ENCODE measurements at regions of chr16 and their contacts with region 1.

Region 1: DNA sequence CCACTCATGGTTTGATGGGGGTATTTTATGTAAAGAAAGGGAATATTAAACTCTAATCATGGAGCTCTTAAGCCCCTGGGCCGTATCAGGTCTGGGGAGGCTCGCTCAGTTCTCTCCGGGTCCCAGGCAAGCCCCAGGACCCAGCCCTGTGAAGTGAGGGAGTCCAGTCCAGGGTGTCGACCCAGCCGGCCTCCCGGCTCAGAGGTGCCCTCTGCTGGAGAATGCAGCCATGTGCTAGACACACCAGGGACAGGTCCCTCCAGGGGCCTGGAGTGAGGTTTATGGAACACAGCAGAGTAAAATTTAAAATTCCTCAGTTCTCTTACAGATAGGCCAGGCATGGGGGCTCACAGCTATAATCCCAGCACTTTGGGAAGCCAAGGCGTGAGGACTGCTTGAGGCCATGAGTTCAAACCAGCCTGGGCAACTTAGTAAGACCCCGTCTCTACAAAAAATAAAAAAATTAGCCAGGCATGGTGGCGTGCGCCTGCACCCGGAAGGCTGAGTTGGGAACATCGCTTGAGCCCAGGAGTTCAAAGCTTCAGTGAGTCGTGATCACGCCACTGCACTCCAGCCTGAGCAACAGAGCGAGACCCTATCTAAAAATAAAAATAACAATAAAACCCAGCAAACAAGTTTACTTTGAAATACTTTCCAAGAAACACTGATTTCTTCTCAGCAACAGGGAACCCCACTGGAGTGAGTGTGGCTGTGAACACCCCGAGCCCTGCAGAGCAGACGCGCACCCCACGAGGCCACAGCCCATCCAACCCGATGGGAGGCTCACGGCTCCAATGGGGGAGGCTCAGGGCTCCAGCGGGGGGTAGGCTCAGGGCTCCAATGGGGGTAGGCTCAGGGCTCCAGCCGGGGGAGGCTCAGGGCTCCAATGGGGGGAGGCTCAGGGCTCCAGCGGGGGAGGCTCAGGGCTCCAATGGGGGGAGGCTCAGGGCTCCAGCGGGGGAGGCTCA is 72.2 kb downstream of the ZNF778 start:
- DNase-seq: peak; percentile 61 to 79 (median 67)
- H3K4me3 ChIP-seq: no peak overlapping the region
- H3K27ac ChIP-seq: no peak overlapping the region
- H3K4me1 ChIP-seq: no peaks in the 10 kb centered on the region
- H3K27me3 ChIP-seq: no peaks in the 10 kb centered on the region

Region 2: DNA sequence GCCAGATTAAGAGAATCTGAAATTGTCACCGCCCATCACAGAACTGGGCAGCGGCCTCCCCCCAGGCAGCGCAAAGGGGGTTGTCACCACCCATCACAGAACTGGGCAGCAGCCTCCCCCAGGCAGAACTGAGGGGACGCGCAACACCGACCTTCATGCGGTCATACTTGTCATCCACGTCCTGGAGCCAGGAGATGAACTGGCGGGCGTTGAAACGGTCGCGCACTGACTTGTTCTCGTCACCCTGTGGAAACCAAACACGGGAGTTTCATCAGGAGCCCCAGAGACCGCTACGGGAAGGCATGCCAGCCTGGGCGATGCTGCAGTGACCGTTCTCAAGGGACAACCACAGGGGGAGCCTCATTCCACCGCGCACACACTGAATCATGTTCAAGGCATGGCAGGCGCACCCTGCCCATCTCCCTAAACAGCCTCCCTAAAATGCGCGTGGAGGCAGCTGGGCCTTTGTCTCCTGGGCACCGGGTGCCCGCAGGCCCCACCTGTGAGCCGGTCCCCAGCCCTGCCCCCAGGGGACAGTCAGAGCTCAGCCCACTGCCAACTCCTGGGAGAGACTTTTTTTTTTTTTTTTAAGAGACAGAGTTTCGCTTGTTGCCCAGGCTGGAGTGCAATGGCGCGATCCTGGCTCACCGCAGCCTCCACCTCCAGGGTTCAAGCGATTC is 18.9 kb before region 1 on chr16:
- CTCF ChIA-PET with region 1: interaction called, 10 read pairs
- POLR2A ChIA-PET with region 1: no interaction called
- DNase-seq: no peak
- H3K4me3 ChIP-seq: no peak overlapping the region
- H3K27ac ChIP-seq: no peak overlapping the region
- H3K4me1 ChIP-seq: no peaks in the 10 kb centered on the region
- H3K27me3 ChIP-seq: no peaks in the 10 kb centered on the region

Region 3: DNA sequence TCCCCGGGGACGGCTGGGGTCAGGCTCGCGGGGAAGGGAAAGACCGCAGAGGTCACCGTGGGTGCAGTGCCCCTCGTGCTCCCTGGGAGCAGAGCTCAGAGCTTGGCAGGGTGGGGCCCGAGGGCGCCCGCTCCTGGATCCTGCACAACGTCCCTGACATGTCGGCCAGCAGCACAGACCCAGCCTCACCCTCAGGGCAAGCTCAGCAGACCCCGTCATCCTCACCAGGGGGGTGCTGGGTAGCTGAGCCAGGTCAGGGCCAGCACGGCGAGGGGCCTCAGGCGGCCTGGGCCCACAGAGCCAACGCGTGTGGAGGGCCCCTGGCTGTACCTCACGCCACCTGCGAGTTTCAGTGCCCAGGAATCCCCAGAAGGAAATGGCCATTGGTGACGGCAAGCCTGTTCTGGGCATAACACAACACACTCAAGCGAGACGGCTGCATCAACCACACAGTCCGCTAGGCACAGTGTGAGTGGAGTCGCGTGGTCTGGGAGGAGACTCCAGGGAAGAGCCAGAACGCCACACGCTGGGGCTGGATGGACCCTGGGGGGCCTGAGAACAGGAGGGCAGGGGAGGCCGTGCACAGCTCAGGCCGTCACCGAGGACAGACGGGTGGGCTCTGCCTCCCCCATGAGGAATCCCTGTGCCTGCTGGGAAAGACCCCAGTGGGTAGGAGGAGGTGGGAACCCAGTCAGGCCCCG is 11.9 kb before region 1 on chr16:
- CTCF ChIA-PET with region 1: interaction called, 40 read pairs
- POLR2A ChIA-PET with region 1: no interaction called
- DNase-seq: no peak
- H3K4me3 ChIP-seq: no peak overlapping the region
- H3K27ac ChIP-seq: no peak overlapping the region
- H3K4me1 ChIP-seq: no peaks in the 10 kb centered on the region
- H3K27me3 ChIP-seq: no peaks in the 10 kb centered on the region

Region 4: GRCh38 chr16:89303617-89304016 is 13.9 kb after region 1 on chr16:
- CTCF ChIA-PET with region 1: interaction called, 20 read pairs
- POLR2A ChIA-PET with region 1: no interaction called
- DNase-seq: peak in 2 of 3 donors; percentile 72
- H3K4me3 ChIP-seq: no peak overlapping the region
- H3K27ac ChIP-seq: peak overlapping the region in 1 of 2 experiments; percentile 27
- H3K4me1 ChIP-seq: peaks cover 0 to 32% (median 25%) of the 10 kb centered on the region in 4 experiments
- H3K27me3 ChIP-seq: no peaks in the 10 kb centered on the region

Region 5: GRCh38 chr16:89308390-89309333 is 18.9 kb after region 1 on chr16:
- CTCF ChIA-PET with region 1: interaction called, 25 read pairs
- POLR2A ChIA-PET with region 1: no interaction called
- DNase-seq: peak in 2 of 3 donors; percentile 32 to 38
- H3K4me3 ChIP-seq: no peak overlapping the region
- H3K27ac ChIP-seq: no peak overlapping the region
- H3K4me1 ChIP-seq: peaks cover 0 to 20% (median 14%) of the 10 kb centered on the region in 4 experiments
- H3K27me3 ChIP-seq: no peaks in the 10 kb centered on the region

Region 6: DNA sequence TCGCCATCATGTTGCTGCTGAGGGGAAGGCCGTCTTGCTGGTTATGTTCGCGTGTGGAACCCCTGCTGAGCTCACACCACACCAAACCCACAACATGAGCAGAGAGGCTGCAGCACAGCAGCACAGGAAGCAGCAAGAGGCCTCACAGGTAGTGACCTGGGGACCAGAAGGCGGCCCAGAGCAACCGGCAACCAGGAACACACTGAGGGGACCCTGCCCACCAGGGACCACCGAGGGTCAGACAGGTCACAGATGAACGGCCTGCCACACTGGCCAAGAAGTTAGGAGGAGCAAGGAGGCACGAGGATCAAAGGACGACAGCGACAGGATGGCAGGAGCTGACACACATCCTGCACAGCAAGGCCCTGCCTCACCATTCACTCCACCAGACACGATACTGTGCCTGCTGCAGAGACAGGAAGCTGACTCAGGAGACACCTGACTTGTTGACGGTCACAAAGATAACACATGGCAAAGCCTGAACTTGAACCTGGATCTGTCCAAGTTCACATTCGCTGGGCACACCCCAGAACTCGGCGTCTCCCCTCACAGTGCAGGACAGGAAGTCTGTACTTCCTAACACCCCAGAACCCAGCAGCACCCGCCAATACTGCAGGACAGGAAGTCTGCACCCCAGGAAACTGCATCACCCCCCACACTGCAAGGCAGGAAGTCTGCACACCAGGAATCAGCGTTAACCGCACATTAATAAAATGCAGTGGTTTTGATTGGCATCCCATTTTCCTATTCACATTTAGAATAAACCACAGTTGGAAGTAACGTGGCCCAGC is 26.3 kb after region 1 on chr16:
- CTCF ChIA-PET with region 1: interaction called, 25 read pairs
- POLR2A ChIA-PET with region 1: no interaction called
- DNase-seq: peak; percentile 90 to 98 (median 96)
- H3K4me3 ChIP-seq: peak overlapping the region in 4 of 7 experiments; percentile 17 to 60 (median 40)
- H3K27ac ChIP-seq: peak overlapping the region; percentile 41 to 74
- H3K4me1 ChIP-seq: peaks cover 3 to 79% (median 68%) of the 10 kb centered on the region in 4 experiments
- H3K27me3 ChIP-seq: no peaks in the 10 kb centered on the region

Measured in common myeloid progenitor, CD34-positive (primary cell).